Activated T-helper 1 cell treated with anti-CD3 and anti-CD28 coated beads, Interleukin-12 subunit alpha, Interleukin-12 subunit beta, Interleukin-2, Interleukin-4 antibody, amounts not matched to agents 30 ng/mL and 10 ng/mL and 1 ng/mL, durations not matched to agents 14 hours and 24 hours and 36 hours (primary cell): ENCODE measurements at regions of chr2 and their contacts with region 1.

Region 1: DNA sequence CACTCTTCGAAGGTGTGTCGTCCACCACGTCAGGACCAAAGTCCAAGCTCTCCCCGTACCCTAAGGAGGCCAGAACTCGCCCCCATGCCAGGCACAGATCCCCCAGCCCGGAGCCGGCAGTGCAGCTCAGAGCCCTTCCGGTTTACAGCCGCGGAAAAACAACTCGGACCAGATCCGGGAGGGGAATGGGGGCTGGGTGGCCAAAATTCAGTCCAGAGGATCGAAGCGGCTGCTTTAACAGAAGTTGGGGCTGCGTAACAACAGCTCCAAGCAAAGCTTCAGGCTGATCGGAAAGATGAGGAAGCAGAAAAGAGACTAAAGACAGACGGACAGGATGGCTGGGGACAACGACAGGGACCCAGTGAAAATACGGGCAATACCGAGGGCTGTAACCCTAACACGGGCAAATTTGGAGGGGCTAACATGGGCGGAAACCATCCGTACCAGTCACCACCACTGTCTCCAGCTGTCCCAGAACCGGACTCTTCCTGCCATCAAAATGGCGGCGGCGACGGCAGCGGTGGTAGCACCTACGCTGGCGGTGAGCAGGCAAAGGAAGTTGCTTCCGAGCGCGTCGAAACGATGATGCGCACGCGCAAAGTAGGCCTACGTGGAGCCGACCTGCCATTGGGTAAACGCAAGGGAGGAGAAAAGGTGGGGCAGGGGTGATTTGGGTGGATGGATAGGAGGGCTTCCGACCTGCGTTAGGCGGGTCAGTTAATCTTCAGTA is at the start of gene MMADHC:
- DNase-seq: peak; percentile 91
- H3K4me3 Mint-ChIP-seq: peak within 1 kb of the TSS; percentile 97
- H3K27ac Mint-ChIP-seq: peak within 1 kb of the TSS; percentile 99
- H3K4me1 Mint-ChIP-seq: peaks cover 43% of the 10 kb centered on the region
- H3K27me3 Mint-ChIP-seq: peaks cover 10% of the 10 kb centered on the region
- total RNA-seq, gene MMADHC: 127 and 129 TPM in 2 replicates

Region 2: DNA sequence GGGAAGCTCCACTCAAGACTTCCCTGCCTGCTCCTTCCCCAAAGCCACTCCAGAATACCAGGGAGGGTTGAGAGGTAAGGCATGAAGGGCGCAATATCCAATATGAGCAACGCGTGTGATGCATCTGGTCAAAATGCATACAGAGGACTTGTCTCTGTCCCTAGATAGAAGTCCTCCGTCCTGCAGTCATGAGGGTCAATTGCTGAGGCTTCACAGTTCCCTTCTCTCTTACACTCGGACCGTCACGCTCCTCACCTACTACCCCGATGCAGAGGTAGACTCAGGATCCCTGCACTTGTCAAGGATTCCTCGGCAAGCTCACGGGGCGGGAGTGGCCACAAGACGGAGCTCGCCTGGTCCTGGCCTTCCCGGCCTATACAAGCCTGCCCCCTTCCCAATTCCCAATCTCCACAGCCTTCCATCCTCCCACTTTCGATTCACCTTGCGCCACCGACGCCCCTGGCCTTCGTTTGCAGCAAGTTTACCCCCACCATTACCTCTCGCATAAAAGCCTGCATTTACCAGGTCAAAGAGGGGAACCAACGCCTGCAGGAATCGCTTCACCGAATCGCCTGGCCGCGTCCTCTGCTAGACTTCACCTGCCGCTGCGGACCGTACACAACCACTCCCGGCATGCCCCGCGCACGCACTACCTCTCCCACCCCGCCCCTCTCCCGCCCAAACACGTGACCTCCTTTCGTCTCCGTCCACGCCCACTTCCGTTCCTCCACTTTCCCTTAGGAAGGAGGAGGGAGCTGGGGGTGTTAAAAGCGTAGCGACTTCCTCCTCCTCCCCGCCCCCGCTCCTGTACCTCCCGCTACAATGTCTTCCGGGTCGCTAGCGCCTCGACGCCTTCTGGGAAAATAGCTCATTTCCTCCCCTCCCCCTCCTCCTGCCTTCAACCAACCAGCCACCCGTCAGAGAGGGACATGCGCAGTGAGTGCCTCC is 1567.0 kb before region 1 on chr2 and contains the start of gene ORC4:
- intact Hi-C with region 1: loop called (anchors 1 kb)
- DNase-seq: peak; percentile 95
- H3K4me3 Mint-ChIP-seq: peak within 1 kb of the TSS; percentile 98
- H3K27ac Mint-ChIP-seq: peak within 1 kb of the TSS; percentile 95
- H3K4me1 Mint-ChIP-seq: peaks cover 40% of the 10 kb centered on the region
- H3K27me3 Mint-ChIP-seq: no peaks in the 10 kb centered on the region
- total RNA-seq, gene ORC4: 29.2 and 34.2 TPM in 2 replicates

Region 3: GRCh38 chr2:149597668-149598326 is 10.4 kb after region 1 on chr2:
- intact Hi-C with region 1: loop called (anchors 1 kb)
- DNase-seq: peak; percentile 38
- H3K4me3 Mint-ChIP-seq: no peak overlapping the region
- H3K27ac Mint-ChIP-seq: peak overlapping the region; percentile 15
- H3K4me1 Mint-ChIP-seq: peaks cover 23% of the 10 kb centered on the region
- H3K27me3 Mint-ChIP-seq: peaks cover 14% of the 10 kb centered on the region

Region 4: GRCh38 chr2:150234787-150235446 is 647.5 kb after region 1 on chr2:
- intact Hi-C with region 1: no loop called
- DNase-seq: no peak
- H3K4me3 Mint-ChIP-seq: no peak overlapping the region
- H3K27ac Mint-ChIP-seq: no peak overlapping the region
- H3K4me1 Mint-ChIP-seq: no peaks in the 10 kb centered on the region
- H3K27me3 Mint-ChIP-seq: no peaks in the 10 kb centered on the region

Region 5: DNA sequence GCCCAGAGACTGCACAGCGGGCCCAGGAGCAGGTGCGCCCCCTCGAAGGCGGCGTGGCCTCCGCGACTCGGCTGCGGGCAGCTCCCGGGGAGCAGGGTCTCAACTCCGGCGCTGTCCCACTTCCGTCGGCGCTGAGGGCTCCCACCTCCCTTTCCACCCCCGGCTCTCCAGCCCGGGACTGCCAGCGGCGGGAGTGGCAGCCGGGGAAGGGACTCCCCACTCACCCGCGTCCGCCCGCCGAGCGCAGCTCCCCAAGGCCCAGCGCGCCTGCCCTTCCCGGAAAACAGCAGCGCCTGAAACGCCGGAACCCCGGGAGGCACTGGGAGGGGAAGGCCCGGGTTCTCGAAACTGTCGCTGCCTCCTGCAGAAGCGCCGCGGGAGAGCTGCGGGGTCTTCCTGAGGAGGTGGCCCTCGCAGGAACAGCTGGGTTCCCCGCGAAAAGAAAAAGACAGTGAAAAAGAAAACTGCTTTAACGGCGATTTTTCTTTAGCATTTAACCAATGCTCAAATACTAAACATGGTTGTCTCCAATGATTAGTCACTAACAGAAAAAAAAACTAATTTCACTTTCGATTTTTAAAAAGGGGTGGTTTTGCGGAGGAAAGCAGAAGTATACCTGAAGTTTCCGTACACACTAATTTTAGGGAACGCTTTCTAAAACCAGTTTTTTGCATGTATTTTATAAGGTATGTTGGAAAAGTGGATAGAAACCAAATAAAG is 1702.1 kb after region 1 on chr2 and contains the start of gene NMI:
- intact Hi-C with region 1: loop called (anchors 5 kb)
- DNase-seq: peak; percentile 74
- H3K4me3 Mint-ChIP-seq: peak within 1 kb of the TSS; percentile 88
- H3K27ac Mint-ChIP-seq: peak within 1 kb of the TSS; percentile 98
- H3K4me1 Mint-ChIP-seq: peaks cover 44% of the 10 kb centered on the region
- H3K27me3 Mint-ChIP-seq: peaks cover 8% of the 10 kb centered on the region
- total RNA-seq, gene NMI: 36.8 and 40.1 TPM in 2 replicates

Region 6: DNA sequence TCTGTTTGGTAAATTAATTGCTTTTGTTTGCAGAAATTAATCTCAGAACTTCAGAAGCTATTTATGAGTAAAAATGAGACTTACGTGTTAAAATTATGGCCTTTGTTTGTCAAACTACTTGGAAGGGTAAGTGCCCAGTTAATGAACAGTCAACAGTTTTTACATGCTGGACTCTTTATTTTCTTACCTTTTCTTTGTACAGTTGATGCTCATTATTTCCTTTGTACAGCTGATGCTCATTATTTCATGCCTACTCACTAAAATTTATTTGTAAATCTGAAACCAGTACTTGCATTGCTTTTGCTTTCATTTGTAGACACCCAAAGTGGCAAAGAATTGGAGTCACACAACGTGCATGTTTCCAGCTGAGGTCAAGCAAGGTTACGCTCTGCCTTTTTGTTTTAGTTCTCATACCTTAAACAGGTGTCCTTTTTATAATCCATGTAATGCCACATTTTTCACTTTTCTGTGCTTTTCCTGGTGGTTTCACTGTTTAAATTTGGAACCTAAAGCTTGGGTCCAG is 1835.6 kb after region 1 on chr2:
- intact Hi-C with region 1: loop called (anchors 5 kb)
- DNase-seq: no peak
- H3K4me3 Mint-ChIP-seq: no peak overlapping the region
- H3K27ac Mint-ChIP-seq: peak overlapping the region; percentile 74
- H3K4me1 Mint-ChIP-seq: peaks cover 29% of the 10 kb centered on the region
- H3K27me3 Mint-ChIP-seq: no peaks in the 10 kb centered on the region